HepG2 (cell line): ENCODE measurements at regions of chrX and their contacts with region 1.

Region 1: GRCh38 chrX:115642895-115643530 is 82.0 kb downstream of the PLS3 start:
- DNase-seq: peak; percentile 6
- ATAC-seq: no peak
- H3K4me3 ChIP-seq: no peak overlapping the region
- H3K27ac ChIP-seq: no peak overlapping the region
- H3K4me1 ChIP-seq: no peaks in the 10 kb centered on the region
- H3K27me3 ChIP-seq: no peaks in the 10 kb centered on the region
- CTCF ChIP-seq: peak; percentile 60
- EP300 ChIP-seq: no peak
- POLR2A ChIP-seq: no peak
- RAD21 ChIP-seq: no peak

Region 2: DNA sequence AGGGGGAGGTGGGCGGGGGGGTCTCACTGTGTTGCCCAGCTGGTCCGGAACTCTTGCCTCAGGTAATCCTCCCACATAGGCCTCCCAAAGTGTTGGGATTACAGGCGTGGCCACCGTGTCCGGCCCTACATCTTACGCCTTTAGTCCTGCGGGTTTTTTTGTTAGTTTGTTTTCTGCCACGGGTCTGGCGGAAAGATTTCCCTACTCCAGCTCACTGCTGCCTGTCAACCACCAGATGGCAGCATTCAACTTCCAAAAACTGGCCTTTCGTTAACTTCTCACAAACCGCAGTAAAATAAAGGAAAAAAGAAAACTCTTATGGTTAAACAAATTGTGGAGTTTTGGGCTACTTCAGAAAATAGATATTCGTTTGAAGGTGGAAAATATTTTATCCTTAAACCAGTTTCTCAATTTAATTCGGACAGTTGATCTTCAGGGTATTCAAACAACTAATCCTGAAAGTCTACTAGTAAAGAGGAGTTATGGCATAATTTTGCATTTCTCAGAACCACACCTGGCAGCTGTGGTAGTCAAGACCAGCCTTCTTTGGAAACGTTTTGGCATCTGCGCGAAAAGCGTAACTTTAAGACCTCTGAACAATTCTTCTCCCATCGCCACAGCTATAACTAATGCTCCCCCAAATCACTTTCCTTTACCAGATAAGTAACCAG is 312.4 kb before region 1 on chrX:
- CTCF ChIA-PET with region 1: interaction called, 7 read pairs
- POLR2A ChIA-PET with region 1: no interaction called
- in situ Hi-C with region 1: loop called (anchors 10 kb)
- intact Hi-C with region 1: loop called (anchors 1 kb)
- DNase-seq: peak; percentile 36
- ATAC-seq: no peak; the same call in 2 of the 3 replicates
- H3K4me3 ChIP-seq: no peak overlapping the region; a peak in 1 of 6 replicates
- H3K27ac ChIP-seq: no peak overlapping the region
- H3K4me1 ChIP-seq: peaks cover 13% of the 10 kb centered on the region
- H3K27me3 ChIP-seq: no peaks in the 10 kb centered on the region
- CTCF ChIP-seq: peak; percentile 66
- EP300 ChIP-seq: no peak
- POLR2A ChIP-seq: no peak
- RAD21 ChIP-seq: peak; percentile 53

Region 3: DNA sequence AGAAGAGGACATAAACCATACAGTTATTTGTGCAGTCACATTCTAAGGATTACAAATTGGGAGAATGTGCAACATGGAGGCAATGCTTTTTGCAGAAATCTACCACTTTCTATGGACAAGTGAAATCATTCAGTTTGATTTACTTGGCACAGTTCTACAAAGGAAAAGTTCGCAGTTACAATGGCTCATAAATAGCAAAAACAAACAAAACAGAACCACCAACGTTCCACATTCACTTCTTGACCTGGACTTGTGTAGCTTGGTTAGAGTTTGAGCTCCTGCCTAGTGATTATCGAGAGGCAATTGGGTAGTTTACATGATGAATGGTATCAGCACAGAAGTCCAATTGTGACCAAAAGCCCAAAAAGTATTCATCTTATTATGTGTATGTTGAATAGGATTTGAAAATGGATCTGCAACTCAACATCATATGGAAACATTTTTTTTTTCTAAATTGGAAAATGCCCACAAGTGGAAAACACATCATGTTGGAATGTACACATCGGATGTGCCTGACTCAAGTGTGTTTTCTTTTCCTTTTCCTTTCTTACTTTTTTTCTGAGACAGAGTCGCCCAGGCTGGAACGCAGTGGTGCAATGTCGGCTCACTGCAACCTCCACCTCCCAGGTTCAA is 229.7 kb before region 1 on chrX:
- CTCF ChIA-PET with region 1: no interaction called
- POLR2A ChIA-PET with region 1: no interaction called
- in situ Hi-C with region 1: no loop called
- intact Hi-C with region 1: no loop called
- DNase-seq: no peak
- ATAC-seq: no peak
- H3K4me3 ChIP-seq: no peak overlapping the region
- H3K27ac ChIP-seq: no peak overlapping the region
- H3K4me1 ChIP-seq: no peaks in the 10 kb centered on the region
- H3K27me3 ChIP-seq: no peaks in the 10 kb centered on the region
- CTCF ChIP-seq: no peak
- EP300 ChIP-seq: no peak
- POLR2A ChIP-seq: no peak
- RAD21 ChIP-seq: no peak

Region 4: DNA sequence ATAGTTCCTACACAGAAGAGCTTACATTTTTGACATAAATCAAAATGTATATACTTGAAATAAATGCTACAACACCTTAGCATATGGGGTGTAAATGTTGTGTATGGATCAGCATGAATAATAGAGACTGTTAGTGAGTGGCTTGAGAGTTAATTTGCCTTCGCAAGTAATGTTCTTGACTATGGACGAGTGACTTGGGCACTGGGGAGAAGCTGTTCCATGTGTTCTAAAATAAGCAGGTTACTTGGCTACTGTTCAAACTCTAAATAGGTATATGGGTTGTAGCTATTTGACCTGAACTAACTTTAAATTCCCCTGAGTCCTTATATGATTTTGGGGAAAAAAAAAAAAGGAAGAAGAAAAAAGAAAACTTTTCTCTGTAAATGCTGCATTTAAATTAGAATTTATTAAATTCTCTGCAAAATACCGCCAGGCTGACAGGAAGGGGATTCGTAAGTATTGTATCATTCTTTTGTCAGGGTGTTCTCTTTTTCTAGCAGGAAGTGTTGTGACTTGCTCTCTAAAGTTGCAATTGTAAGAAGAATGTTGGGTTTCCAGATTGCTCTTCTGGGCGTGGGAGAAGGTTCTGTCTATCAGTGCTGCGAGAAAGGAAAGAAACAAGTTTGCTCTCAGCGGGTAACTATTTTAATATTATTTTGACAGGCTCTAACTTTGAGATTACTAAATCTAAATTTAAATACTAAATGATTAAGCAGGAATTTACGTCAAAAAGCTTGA is 49.8 kb before region 1 on chrX:
- CTCF ChIA-PET with region 1: no interaction called
- POLR2A ChIA-PET with region 1: no interaction called
- in situ Hi-C with region 1: no loop called
- intact Hi-C with region 1: no loop called
- DNase-seq: no peak
- ATAC-seq: no peak
- H3K4me3 ChIP-seq: no peak overlapping the region
- H3K27ac ChIP-seq: no peak overlapping the region
- H3K4me1 ChIP-seq: peaks cover 2% of the 10 kb centered on the region
- H3K27me3 ChIP-seq: no peaks in the 10 kb centered on the region
- CTCF ChIP-seq: no peak
- EP300 ChIP-seq: no peak
- POLR2A ChIP-seq: no peak
- RAD21 ChIP-seq: no peak